Left ventricle myocardium inferior (tissue), 1 donor: ENCODE measurements at regions of chr19 and their contacts with region 1.

Region 1: GRCh38 chr19:4576016-4576933 is 16.8 kb upstream of the SEMA6B start:
- DNase-seq: peak; percentile 68
- H3K4me3 ChIP-seq: peak overlapping the region; percentile 9
- H3K27ac ChIP-seq: peak overlapping the region; percentile 85
- H3K4me1 ChIP-seq: peaks cover 40% of the 10 kb centered on the region
- H3K27me3 ChIP-seq: peaks cover 60% of the 10 kb centered on the region
- CTCF ChIP-seq: peak; percentile 79

Region 2: GRCh38 chr19:4524808-4525562 is 51.3 kb before region 1 on chr19:
- intact Hi-C with region 1: no loop called
- DNase-seq: peak; percentile 58
- H3K4me3 ChIP-seq: no peak overlapping the region
- H3K27ac ChIP-seq: no peak overlapping the region
- H3K4me1 ChIP-seq: peaks cover 2% of the 10 kb centered on the region
- H3K27me3 ChIP-seq: no peaks in the 10 kb centered on the region
- CTCF ChIP-seq: peak; percentile 80

Region 3: DNA sequence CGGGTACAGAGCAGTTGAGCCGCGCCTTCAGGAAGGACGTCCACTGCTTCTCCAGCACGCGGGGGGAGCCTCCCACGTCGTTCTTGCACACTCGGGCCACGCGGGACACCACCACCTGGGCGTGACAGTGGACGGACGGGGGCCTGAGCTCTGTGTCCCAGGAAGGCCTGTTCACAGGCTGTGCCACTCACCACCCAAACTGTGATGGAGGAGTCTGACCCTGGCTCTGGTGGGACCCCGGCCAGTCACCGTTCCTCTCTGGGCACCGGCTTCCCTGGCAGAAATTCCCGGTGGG is 23.8 kb before region 1 on chr19:
- intact Hi-C with region 1: loop called (anchors 2 kb)
- DNase-seq: no peak
- H3K4me3 ChIP-seq: no peak overlapping the region
- H3K27ac ChIP-seq: no peak overlapping the region
- H3K4me1 ChIP-seq: peaks cover 8% of the 10 kb centered on the region
- H3K27me3 ChIP-seq: no peaks in the 10 kb centered on the region
- CTCF ChIP-seq: no peak

Region 4: DNA sequence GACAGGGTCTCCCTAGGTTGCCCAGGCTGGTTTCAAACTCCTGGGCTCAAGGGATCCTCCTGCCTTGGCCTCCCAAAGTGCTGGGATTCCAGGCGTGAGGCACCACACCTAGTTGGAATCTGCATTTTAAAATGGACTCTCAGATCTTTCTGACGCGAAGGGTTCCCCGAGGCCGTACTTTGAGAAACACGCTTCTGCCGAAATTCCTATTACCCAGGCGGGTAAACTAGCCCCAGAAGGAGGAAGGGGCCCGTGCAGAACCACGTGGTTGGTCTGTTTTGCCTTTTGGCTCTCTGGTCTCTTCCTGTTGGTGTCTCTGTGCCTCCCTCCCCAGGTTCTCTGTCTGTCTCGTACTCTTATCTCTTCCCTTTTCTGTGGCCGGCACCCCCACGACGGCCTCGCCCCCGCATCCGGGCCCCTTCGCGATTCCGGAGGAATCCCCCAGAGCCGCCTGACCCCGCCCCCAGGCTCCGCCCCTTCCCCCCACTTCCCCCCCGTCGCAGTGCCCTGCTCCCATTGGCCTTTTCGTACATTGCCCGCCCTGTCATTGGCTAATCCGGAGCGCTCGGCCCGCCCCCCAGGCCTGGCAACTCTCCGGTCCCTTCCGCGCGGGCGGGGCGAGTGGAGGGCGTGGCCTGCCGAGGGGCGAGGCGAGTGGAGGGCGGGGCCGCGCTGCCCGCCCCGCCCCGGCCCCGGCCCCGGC is 62.7 kb after region 1 on chr19 and contains the start of gene TNFAIP8L1:
- intact Hi-C with region 1: loop called (anchors 5 kb)
- DNase-seq: peak; percentile 97
- H3K4me3 ChIP-seq: peak within 1 kb of the TSS; percentile 84
- H3K27ac ChIP-seq: peak within 1 kb of the TSS; percentile 90
- H3K4me1 ChIP-seq: peaks cover 56% of the 10 kb centered on the region
- H3K27me3 ChIP-seq: no peaks in the 10 kb centered on the region
- CTCF ChIP-seq: no peak
- total RNA-seq, gene TNFAIP8L1: 4.2 TPM